Activated naive CD4-positive, alpha-beta T cell treated with anti-CD3 and anti-CD28 coated beads, Interleukin-2, amount 10 ng/mL, durations not matched to agents 7 days and 5 days (primary cell): ENCODE measurements at regions of chr7 and their contacts with region 1.

Region 1: DNA sequence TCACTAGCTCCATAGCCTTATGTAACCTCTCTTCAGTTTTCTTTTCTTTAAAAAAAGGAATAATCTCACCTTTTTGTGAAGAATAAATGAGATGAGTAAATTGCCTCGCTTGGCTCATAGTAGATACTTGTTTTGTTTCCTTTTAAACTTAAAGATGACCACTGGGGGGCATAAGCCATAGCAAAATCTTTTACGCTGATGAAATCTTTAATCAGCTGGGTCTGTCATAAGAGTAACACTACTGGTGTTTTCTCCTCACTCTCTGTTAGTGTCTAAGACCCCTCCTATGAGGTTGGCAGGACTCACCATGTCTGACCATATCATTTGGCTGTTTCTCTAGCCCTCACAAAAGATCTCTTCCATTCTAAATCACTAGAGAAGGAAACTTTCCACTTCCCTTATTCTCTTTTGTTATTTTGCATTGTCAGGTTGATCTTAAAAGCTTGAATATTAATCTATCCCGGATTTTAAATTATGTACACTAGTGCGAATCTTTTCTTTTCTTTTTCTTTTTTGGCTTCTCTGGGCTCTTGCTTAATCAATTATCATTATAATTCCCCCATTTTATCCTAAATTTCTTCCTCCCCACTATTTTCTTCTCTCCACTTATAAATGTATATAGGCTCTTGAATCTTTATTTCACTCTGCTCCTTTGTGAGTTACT is 12.5 kb downstream of the STAG3 start:
- DNase-seq: no peak
- H3K4me3 Mint-ChIP-seq: no peak overlapping the region
- H3K27ac Mint-ChIP-seq: peak overlapping the region; percentile 42
- H3K4me1 Mint-ChIP-seq: peaks cover 48% of the 10 kb centered on the region
- H3K27me3 Mint-ChIP-seq: no peaks in the 10 kb centered on the region

Region 2: DNA sequence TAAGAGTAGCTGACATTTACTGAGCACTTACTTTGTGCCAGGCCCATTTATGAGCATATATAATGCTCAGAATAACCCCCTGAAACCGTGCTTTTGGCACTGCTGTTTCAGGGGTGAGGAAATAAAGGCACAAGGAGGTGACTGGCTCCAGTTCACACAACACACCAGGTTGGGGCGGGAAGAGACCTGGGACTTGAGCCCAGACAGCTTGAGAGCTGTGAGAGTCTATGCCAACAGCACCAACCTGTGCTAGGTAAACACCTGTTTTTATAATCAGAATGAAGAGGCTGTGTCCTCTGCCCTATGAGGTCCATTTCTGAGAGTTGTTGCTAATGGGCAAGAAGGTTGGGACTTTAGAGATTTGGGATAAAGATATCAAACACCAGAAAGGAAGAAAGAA is 205.6 kb before region 1 on chr7:
- CTCF ChIA-PET with region 1: no interaction called
- DNase-seq: no peak
- H3K4me3 Mint-ChIP-seq: no peak overlapping the region
- H3K27ac Mint-ChIP-seq: no peak overlapping the region
- H3K4me1 Mint-ChIP-seq: peaks cover 3% of the 10 kb centered on the region
- H3K27me3 Mint-ChIP-seq: peaks cover 44% of the 10 kb centered on the region

Region 3: DNA sequence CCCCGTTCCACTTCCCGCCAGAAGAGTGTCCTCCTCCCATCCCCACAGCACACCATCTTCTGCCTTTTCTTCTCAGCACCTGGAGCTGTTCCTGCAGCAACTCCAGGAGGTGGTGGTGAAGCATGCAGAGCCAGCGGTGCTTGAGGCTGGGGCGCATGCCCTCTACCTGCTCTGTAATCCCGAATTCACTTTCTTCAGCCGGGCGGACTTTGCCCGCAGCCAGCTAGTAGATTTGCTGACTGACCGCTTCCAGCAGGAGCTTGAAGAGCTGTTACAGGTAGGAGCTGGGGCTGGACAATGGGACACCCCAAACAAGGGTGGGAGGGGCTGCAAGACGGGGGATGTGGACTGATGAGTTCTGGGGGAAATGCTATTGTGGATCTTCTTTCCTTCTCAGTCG is 10.5 kb after region 1 on chr7:
- CTCF ChIA-PET with region 1: interaction called, 12 read pairs
- DNase-seq: no peak
- H3K4me3 Mint-ChIP-seq: no peak overlapping the region
- H3K27ac Mint-ChIP-seq: no peak overlapping the region
- H3K4me1 Mint-ChIP-seq: peaks cover 8% of the 10 kb centered on the region
- H3K27me3 Mint-ChIP-seq: peaks cover 14% of the 10 kb centered on the region

Region 4: GRCh38 chr7:100208911-100209408 is 18.8 kb after region 1 on chr7:
- CTCF ChIA-PET with region 1: interaction called, 49 read pairs
- DNase-seq: peak; percentile 69
- H3K4me3 Mint-ChIP-seq: peak overlapping the region; percentile 49
- H3K27ac Mint-ChIP-seq: peak overlapping the region; percentile 85
- H3K4me1 Mint-ChIP-seq: peaks cover 56% of the 10 kb centered on the region
- H3K27me3 Mint-ChIP-seq: no peaks in the 10 kb centered on the region

Region 5: DNA sequence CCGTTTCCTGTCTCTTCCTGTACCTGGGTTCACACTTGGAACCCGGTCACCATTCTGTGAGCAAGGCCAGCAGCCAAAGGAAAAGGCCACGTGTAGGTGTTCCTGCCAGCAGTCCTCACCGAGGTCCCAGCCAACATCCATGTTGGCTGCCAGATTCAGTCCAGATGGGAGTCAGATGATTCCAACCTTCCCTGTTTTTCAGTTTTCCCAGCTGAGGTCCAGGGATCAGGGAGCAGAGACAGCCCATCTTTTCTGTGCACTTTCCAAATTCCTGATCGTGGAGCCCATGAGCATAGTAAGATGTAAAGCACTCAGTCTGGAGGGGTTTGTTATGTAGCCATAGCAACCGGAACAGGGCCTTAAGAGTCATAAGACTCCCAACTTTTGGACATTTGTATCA is 25.7 kb after region 1 on chr7:
- CTCF ChIA-PET with region 1: interaction called, 49 read pairs
- DNase-seq: no peak
- H3K4me3 Mint-ChIP-seq: no peak overlapping the region
- H3K27ac Mint-ChIP-seq: peak overlapping the region; percentile 56
- H3K4me1 Mint-ChIP-seq: peaks cover 66% of the 10 kb centered on the region
- H3K27me3 Mint-ChIP-seq: no peaks in the 10 kb centered on the region